MCF 10A (cell line): ENCODE measurements at regions of chr1 and their contacts with region 1.

Region 1: DNA sequence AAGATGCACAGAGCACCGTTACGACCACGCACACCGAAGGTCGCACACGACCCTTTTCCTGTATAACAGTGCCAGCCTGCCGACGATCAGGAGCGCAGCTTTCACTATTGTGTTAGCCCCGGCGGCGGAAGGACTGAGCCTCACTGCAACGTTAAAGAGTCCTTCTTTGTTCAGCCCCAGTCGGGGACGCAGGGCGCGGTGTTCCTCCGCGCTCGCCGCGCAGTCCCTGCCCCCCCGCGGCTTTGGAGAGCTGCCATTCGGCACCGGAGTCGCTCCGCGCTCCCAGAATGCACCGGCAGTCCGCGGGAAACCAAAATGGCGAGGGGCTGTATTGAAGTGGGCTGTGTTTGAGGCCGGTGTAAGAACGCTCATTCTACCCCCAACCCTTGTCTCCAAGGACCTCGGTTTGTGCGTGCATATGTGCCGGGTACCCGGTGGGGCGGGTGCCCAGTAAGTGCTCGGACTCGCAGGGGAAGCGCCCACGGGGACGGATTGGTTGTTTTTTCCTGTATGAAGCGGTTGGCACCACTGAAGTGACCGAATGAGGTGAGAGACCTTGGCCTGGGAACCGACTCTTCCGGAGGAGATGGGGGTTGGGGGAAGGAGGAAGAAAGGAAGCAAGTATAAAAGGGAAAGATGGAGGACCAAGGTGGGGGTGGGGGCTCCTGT is at the start of gene MTF2:
- DNase-seq: peak; percentile 93
- H3K4me3 Mint-ChIP-seq: peak within 1 kb of the TSS; percentile 99
- H3K27ac Mint-ChIP-seq: peak within 1 kb of the TSS; percentile 95
- H3K4me1 Mint-ChIP-seq: peaks cover 12% of the 10 kb centered on the region
- H3K27me3 Mint-ChIP-seq: no peaks in the 10 kb centered on the region
- CTCF ChIP-seq: no peak
- total RNA-seq, gene MTF2: 17.0 and 20.0 TPM in 2 replicates

Region 2: DNA sequence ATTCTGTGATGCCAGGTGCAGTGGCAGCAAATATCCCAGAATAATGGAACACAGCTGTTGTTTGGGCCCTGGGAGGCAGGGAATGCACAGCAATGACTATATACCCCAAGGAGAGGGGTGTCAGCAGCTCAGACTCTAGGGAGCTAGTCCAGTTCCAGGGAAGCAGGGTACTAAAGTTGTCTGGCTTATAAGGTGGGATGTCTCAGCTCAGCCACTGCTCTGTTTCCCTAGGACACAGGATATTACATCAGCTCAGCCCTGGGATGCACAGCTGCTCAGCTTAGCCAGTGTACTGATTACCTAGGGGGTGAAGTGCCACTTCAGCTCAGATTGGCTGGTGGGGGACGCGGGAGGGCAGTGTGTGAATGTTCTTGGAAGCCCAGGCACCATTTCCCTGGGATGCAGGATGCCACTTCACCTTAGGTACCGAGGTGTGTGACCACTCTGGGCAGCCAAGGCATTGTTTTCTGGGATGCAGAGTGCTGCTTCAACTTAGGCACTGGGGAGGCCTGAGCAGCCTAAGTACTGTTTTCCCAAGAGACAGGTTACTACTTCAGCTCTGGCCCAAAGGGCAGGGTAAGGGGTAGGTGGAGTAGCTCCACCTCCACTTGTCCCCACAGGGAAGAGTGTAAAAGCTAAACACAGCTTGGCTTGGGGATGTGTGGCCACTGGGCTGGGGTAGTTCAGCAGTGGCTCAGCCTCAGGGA is 177.3 kb before region 1 on chr1:
- CTCF ChIA-PET with region 1: no interaction called
- POLR2A ChIA-PET with region 1: no interaction called
- intact Hi-C with region 1: no loop called
- DNase-seq: no peak
- H3K4me3 Mint-ChIP-seq: no peak overlapping the region
- H3K27ac Mint-ChIP-seq: no peak overlapping the region
- H3K4me1 Mint-ChIP-seq: no peaks in the 10 kb centered on the region
- H3K27me3 Mint-ChIP-seq: no peaks in the 10 kb centered on the region
- CTCF ChIP-seq: no peak

Region 3: GRCh38 chr1:92944901-92945747 is 134.0 kb before region 1 on chr1:
- CTCF ChIA-PET with region 1: no interaction called
- POLR2A ChIA-PET with region 1: no interaction called
- intact Hi-C with region 1: no loop called
- DNase-seq: no peak
- H3K4me3 Mint-ChIP-seq: no peak overlapping the region
- H3K27ac Mint-ChIP-seq: peak overlapping the region; percentile 6
- H3K4me1 Mint-ChIP-seq: no peaks in the 10 kb centered on the region
- H3K27me3 Mint-ChIP-seq: no peaks in the 10 kb centered on the region
- CTCF ChIP-seq: no peak

Region 4: GRCh38 chr1:93093332-93094006 is 14.3 kb after region 1 on chr1:
- CTCF ChIA-PET with region 1: interaction called, 3 read pairs
- POLR2A ChIA-PET with region 1: interaction called, 10 read pairs
- intact Hi-C with region 1: no loop called
- DNase-seq: no peak
- H3K4me3 Mint-ChIP-seq: no peak overlapping the region
- H3K27ac Mint-ChIP-seq: peak overlapping the region; percentile 78
- H3K4me1 Mint-ChIP-seq: peaks cover 23% of the 10 kb centered on the region
- H3K27me3 Mint-ChIP-seq: no peaks in the 10 kb centered on the region
- CTCF ChIP-seq: no peak

Region 5: GRCh38 chr1:93221913-93222312 is 142.8 kb after region 1 on chr1:
- CTCF ChIA-PET with region 1: no interaction called
- POLR2A ChIA-PET with region 1: interaction called, 28 read pairs
- intact Hi-C with region 1: no loop called
- DNase-seq: peak; percentile 47
- H3K4me3 Mint-ChIP-seq: no peak overlapping the region
- H3K27ac Mint-ChIP-seq: peak overlapping the region; percentile 63
- H3K4me1 Mint-ChIP-seq: peaks cover 12% of the 10 kb centered on the region
- H3K27me3 Mint-ChIP-seq: no peaks in the 10 kb centered on the region
- CTCF ChIP-seq: no peak

Region 6: DNA sequence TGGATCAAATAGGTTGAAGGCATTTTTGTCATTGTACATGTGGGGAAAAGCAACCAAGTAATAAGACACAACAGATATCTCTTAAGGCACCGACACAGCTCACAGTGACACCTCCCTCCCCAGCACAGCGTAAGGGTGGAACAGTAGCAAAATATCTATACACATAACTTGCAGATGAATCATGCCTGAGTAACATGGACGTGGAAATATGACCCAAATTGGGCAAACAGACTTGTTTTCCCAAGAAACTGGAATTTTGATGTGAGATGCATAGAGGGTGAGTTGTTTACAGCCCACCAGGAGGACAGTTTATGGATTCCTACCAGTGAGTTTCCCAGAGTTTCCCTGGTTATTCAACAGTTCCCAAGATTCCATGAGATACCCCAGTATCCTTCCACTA is 259.3 kb after region 1 on chr1:
- CTCF ChIA-PET with region 1: interaction called, 4 read pairs
- POLR2A ChIA-PET with region 1: interaction called, 10 read pairs
- intact Hi-C with region 1: no loop called
- DNase-seq: peak; percentile 85
- H3K4me3 Mint-ChIP-seq: peak overlapping the region; percentile 28
- H3K27ac Mint-ChIP-seq: peak overlapping the region; percentile 87
- H3K4me1 Mint-ChIP-seq: peaks cover 22% of the 10 kb centered on the region
- H3K27me3 Mint-ChIP-seq: no peaks in the 10 kb centered on the region
- CTCF ChIP-seq: no peak